Activated naive CD4-positive, alpha-beta T cell treated with anti-CD3 and anti-CD28 coated beads, Interleukin-2, amount 10 ng/mL, durations not matched to agents 7 days and 5 days (primary cell): ENCODE measurements at regions of chr17 and their contacts with region 1.

Region 1: DNA sequence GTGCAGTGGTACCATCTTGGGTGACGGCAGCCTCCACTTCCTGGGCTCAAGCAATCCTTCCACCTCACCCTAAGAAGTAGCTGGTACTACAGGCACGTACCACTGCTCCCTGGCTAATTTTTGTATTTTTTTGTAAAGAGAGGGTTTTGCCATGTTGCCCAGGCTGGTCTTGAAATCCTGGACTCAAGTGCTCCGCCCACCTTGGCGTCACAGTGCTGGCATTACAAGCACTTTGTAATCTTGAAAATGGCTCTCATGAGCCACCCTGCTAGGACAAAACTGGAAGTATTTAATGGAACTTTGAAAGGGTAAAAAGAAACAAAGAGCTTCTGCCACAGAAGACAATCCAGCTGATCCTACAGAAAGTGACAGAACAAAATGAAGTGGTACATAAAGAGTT is 9.2 kb downstream of the SUMO2 start:
- DNase-seq: no peak
- H3K4me3 Mint-ChIP-seq: no peak overlapping the region
- H3K27ac Mint-ChIP-seq: no peak overlapping the region
- H3K4me1 Mint-ChIP-seq: peaks cover 18% of the 10 kb centered on the region
- H3K27me3 Mint-ChIP-seq: no peaks in the 10 kb centered on the region

Region 2: DNA sequence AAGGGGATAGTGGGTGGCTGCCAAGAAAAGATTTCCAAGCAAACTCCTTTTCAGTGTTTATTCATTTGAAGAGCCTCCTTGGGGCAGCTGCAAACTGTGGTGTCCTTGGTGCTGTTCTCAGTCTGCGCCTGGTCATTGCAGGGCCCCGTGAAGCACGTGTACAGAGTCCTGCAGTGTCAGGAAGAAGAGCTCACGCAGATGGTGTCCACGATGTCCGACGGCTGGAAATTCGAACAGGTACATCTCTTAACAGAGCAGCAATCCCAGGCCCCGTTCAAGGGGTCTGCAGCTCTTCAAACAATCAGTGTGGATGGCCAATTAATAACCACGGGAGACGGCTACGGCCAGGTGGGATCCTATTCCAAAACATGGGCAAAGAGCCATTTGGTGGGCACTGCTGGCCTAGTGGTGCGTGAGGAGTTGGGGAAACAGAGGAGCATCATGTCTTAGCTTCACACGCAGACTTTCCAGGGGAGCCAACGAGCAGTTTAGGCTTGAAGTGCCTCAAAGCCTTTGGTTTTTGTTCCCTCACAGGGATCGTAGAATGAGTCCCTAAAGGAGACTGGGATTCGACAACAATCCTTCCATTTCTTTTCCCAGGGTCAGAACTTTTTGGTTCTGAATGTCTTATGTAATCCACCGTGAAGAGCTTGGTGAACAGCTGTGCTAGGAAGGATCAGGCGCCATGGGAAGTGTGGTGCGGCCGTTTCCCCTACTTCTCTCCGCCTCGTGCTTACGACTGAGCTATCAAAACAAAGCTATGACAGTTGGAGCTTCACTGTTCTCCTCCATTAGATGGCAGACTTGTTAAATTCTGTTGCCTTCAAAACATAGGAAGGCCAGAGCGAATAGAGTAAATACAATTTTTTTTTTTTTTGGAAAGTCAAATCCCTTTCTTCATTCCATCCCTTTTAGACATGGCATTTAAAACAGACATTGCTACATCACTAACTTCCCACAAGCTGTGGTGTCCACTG is 113.9 kb before region 1 on chr17:
- CTCF ChIA-PET with region 1: interaction called, 16 read pairs
- DNase-seq: no peak
- H3K4me3 Mint-ChIP-seq: no peak overlapping the region
- H3K27ac Mint-ChIP-seq: peak overlapping the region; percentile 66
- H3K4me1 Mint-ChIP-seq: peaks cover 32% of the 10 kb centered on the region
- H3K27me3 Mint-ChIP-seq: no peaks in the 10 kb centered on the region

Region 3: DNA sequence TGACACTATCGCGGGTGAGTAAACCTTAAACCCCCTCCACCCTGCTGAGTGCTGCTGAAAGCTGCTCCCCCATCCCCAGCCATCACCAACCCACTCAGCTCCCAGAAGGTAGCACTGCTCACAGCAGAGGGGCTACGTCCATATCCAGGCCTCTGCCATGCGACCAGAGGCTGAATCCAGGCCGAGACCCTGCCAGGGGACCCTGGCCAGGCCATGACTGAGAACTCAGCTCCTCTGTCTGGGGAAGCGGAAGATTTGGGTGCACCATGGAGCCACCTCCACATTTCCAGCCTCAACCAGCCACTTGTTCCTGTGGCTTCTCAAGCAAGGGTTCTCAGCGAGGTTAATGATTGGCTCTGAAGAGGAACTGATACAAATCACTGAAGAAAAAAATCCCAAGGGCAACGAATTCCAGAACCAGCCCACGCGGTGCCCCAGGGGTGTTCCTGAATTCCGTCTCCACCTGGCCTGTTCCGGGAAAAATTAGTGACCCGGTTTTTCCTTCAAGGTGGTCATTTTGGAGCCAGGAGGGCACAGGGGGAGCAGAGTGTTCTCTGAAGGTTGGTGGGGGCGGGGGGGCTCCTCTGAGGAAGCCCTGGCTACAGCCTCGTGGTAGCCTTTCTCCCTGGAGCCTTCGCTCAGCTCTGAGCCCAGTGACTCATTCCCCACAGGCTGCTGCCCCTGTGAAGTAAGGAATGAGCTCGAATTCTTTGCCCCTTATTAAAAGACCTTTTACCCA is 95.1 kb before region 1 on chr17:
- CTCF ChIA-PET with region 1: no interaction called
- DNase-seq: no peak
- H3K4me3 Mint-ChIP-seq: no peak overlapping the region
- H3K27ac Mint-ChIP-seq: no peak overlapping the region
- H3K4me1 Mint-ChIP-seq: peaks cover 26% of the 10 kb centered on the region
- H3K27me3 Mint-ChIP-seq: peaks cover 56% of the 10 kb centered on the region

Region 4: DNA sequence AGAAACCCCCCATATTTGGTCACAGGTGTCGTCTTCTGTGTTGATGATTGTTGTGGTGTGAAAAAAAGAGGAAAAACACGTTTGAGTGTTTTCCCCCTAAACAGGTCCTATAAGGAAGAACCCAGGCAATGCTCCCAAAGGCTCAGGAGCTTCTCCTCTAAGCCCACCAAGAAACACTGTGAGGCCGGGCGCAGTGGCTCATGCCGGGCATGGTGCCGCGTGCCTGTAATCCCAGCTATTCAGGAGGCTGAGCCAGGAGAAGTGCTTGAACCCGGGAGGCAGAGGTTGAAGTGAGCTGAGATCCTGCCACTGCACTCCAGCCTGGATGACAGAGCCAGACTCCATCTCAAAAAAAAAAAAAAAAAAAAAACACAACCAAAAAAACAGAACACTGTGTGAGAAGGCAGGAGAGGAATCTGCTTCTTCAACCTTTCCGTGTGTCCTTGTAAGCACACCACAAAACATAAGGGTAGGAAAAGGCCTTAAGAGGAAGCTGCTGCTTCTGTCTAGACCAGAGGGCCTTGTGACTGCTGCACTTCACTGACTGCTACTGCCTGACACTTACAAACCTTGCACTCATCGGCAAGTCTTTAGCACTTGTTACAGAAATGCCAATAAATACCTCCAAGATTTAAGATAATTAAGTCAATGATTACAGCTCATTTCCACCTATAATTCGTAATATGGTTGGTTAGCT is 28.6 kb before region 1 on chr17:
- CTCF ChIA-PET with region 1: interaction called, 10 read pairs
- DNase-seq: no peak
- H3K4me3 Mint-ChIP-seq: no peak overlapping the region
- H3K27ac Mint-ChIP-seq: peak overlapping the region; percentile 7
- H3K4me1 Mint-ChIP-seq: peaks cover 41% of the 10 kb centered on the region
- H3K27me3 Mint-ChIP-seq: no peaks in the 10 kb centered on the region

Region 5: DNA sequence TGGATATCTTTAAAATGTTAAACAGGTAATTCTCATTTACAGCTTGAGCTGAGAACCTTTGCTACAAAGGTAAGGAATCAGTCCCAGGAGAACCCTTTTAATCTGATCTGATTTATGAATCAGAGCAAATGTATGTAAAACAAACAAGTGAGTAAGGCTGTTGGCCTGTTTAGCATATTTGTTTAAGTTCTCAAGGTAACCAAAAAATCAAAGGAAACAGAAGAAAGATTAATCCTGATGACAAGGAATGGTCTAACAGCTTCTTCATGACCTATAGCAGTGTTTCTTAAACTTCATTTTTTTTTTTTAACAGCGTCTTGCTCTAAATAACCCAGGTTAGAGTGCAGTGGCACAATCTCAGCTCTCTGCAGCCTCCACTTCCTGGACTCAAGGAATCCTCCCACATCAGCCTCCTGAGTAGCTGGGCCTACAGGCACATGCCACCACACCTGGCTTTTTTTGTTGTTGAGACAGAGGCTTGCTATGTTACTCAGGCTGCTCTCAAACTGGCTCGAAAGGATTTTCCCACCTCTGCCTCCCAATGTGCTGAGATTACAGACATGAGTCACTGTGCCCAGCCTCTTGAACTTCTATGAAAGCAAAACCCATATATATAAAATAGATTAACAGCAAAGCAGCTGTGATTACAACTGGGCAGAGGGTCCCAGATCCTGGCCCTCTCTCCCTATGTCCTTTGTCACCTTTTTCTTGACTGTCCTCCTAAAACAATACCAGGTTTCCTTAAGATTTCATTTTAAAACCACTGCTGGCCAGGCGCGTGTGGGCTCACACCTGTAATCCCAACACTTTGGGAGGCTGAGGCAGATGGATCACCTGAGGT is 14.1 kb before region 1 on chr17:
- CTCF ChIA-PET with region 1: interaction called, 10 read pairs
- DNase-seq: no peak
- H3K4me3 Mint-ChIP-seq: no peak overlapping the region
- H3K27ac Mint-ChIP-seq: no peak overlapping the region
- H3K4me1 Mint-ChIP-seq: peaks cover 19% of the 10 kb centered on the region
- H3K27me3 Mint-ChIP-seq: no peaks in the 10 kb centered on the region

Region 6: GRCh38 chr17:75191584-75191983 is 18.1 kb after region 1 on chr17:
- CTCF ChIA-PET with region 1: interaction called, 13 read pairs
- DNase-seq: no peak
- H3K4me3 Mint-ChIP-seq: no peak overlapping the region
- H3K27ac Mint-ChIP-seq: no peak overlapping the region
- H3K4me1 Mint-ChIP-seq: peaks cover 18% of the 10 kb centered on the region
- H3K27me3 Mint-ChIP-seq: no peaks in the 10 kb centered on the region

Region 7: DNA sequence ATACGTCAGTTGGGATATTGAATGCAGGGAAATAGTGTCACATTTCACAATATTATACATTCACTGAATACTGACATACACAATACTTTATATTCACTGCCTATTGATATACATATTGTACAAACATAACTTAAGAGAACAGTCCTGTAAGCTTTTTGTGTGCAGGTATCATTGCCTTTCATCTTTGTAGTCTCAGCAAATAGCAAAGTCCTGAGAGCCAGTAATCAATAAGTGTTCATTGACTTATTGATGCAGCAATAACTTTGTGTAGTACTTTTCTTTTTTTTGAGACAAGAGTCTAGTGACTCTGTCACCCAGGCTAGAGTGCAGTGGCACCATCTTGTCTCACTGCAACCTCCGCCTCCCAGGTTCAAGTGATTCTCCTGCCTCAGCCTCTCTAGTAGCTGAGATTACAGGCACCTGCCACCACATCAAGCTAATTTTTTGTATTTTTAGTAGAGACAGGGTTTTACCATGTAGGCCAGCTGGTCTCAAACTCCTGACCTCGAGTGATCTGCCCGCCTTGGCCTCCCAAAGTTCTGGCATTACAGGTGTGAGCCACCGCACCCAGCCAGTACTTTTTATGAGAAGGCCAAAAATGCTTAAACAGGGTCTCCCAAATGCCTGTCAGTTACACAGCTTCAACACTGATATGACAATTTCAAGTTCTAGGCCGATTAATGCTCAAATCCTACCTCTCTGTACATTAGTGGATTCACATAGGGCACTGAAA is 26.5 kb after region 1 on chr17:
- CTCF ChIA-PET with region 1: interaction called, 35 read pairs
- DNase-seq: no peak
- H3K4me3 Mint-ChIP-seq: no peak overlapping the region
- H3K27ac Mint-ChIP-seq: no peak overlapping the region
- H3K4me1 Mint-ChIP-seq: peaks cover 12% of the 10 kb centered on the region
- H3K27me3 Mint-ChIP-seq: peaks cover 10% of the 10 kb centered on the region